SK-N-SH (cell line): ENCODE measurements at regions of chr12 and their contacts with region 1.

Region 1: DNA sequence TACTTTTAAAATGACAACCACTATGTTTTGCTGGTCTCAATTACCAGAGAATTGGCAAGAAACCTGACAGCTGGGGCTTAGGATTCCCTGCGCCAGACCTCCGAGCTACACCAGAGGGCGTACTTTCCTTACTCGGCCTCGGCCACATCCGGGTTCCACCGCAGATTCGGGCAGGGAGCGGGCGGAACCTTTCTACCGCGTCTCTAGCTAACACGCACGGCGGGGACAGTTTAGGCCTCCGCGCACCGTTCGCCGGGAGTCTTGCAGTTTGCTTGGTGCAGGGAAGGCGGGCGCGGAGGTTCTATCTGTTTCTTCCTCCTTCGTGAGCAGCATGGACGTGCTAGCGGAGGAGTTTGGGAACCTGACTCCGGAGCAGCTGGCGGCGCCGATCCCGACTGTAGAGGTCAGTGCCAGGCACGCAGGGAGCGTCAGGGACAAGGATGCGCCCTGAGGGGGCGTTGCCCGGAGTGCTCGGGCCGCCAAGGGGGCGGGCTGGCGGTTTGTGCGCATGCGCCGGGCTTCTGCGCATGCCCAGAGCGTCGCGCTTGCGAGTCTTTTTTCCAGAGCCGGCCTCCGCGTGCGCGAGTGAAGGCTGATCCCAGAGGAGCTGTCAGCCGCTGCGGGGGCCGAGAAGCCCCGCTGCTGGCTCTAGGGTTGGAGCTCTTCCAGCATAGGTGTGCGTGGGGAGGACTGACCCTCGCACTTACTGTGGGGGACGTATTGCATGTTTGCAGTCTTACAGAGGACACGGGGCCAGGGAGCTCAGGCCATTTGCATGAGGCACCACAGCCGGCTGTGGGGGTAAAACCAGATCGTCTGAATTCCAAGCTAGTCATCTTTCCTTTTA is at the start of gene POLR3B:
- DNase-seq: peak; percentile 96
- H3K4me3 ChIP-seq: peak within 1 kb of the TSS; percentile 82 to 87
- H3K27ac ChIP-seq: peak within 1 kb of the TSS; percentile 91 to 98
- H3K4me1 ChIP-seq: peaks cover 0 to 7% of the 10 kb centered on the region in 2 experiments; a peak in 2 of 4 replicates
- H3K27me3 ChIP-seq: no peaks in the 10 kb centered on the region
- CTCF ChIP-seq: peak; percentile 83
- EP300 ChIP-seq: peak in 1 of 2 experiments; percentile 39; a peak in 2 of 4 replicates
- RAD21 ChIP-seq: peak; percentile 76
- polyA plus RNA-seq, gene POLR3B: 3.3 and 3.9 TPM in 2 replicates

Region 2: DNA sequence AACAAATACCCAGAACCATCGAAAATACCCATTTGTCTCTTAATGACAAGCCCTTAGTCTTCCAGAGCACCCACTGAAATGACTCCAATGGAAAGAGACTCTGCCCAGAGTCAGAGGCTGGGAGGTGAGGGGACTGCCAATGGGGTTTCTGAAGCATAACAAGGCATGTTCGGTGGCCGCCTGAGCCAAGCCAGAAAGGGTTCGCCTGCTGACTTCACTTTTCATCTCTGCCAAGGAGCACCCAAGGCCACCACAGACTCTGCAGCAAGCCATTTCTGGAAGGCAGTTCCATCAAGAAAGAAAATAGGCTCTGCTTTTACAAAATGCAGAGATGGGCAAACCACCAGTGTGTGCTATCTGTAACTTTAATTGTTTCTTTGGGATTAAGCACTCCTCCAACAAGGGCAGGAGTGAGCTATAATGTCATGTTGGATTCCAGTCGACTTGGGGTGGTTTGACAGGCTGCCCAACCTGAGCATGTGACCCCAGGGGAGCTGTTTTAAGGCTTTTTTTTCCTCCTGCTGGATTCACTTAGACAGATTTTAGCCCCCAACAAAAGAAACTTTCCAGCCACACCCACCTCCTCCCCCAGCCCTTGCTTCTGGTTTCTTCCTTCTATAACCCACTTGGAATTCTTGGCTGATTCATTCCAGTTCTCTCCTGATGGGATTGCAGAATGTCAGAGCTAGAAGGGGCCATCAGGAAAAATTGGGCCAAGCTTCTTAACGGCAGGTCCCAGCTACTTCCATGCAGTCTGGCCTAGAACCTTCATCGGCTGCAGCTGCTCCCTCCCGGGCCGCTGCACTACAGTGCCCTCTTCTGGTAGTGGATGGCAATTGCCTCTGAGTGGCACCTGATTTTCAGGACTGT is 134.1 kb before region 1 on chr12:
- CTCF ChIA-PET with region 1: interaction called, 20 read pairs
- POLR2A ChIA-PET with region 1: interaction called, 3 read pairs
- DNase-seq: peak; percentile 81
- H3K4me3 ChIP-seq: peak overlapping the region in 1 of 2 experiments; percentile 21; a peak in 1 of 4 replicates
- H3K27ac ChIP-seq: no peak overlapping the region
- H3K4me1 ChIP-seq: no peaks in the 10 kb centered on the region
- H3K27me3 ChIP-seq: no peaks in the 10 kb centered on the region
- CTCF ChIP-seq: peak; percentile 87
- EP300 ChIP-seq: no peak
- RAD21 ChIP-seq: peak; percentile 75

Region 3: DNA sequence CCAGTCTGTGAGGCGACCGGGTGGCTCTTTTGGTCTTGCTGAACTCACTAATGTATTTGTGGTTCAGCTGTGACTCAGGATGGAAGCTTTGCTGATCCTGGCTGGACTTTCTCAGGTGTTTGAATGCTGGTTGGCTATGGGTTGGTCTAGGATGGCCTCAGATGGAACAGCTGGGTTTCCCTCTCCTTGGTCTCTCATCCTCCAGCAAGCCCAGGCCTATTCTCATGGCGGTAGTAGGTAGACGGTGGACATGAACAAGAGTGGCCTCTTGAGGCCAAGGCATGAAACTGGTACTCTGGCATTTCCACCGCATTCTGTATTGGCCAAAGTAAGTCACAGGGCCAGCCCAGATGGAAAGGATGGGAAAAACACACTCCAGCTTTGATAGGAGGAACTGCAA is 12.0 kb before region 1 on chr12:
- CTCF ChIA-PET with region 1: interaction called, 21 read pairs
- POLR2A ChIA-PET with region 1: no interaction called
- DNase-seq: peak; percentile 25
- H3K4me3 ChIP-seq: no peak overlapping the region
- H3K27ac ChIP-seq: no peak overlapping the region
- H3K4me1 ChIP-seq: peaks cover 4 to 6% of the 10 kb centered on the region in 2 experiments; a peak in 3 of 4 replicates
- H3K27me3 ChIP-seq: no peaks in the 10 kb centered on the region
- CTCF ChIP-seq: peak; percentile 42
- EP300 ChIP-seq: no peak
- RAD21 ChIP-seq: peak; percentile 61

Region 4: GRCh38 chr12:106378788-106379187 is 21.0 kb after region 1 on chr12:
- CTCF ChIA-PET with region 1: interaction called, 16 read pairs
- POLR2A ChIA-PET with region 1: no interaction called
- DNase-seq: no peak
- H3K4me3 ChIP-seq: no peak overlapping the region
- H3K27ac ChIP-seq: no peak overlapping the region
- H3K4me1 ChIP-seq: no peaks in the 10 kb centered on the region
- H3K27me3 ChIP-seq: no peaks in the 10 kb centered on the region
- CTCF ChIP-seq: no peak
- EP300 ChIP-seq: no peak
- RAD21 ChIP-seq: no peak

Region 5: DNA sequence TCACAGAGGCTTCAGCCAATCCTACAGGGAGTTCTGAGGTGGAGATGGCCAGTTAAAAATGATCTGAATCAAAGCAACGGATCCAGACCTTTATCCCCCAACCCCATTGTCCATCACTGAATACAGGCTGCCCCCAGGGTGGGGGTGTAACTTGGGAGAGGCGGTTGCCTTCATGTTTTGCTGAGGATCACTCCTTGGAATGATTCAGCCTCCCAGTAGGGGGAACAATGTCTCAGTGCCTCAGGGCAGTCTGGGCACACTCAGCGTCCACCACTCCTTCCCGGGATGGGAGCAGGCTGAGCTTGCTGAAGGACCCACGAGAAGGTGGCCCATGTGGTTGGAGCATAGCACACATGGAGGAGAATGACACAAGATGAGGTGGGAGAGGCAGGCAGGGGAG is 285.2 kb after region 1 on chr12:
- CTCF ChIA-PET with region 1: no interaction called
- POLR2A ChIA-PET with region 1: no interaction called
- DNase-seq: no peak
- H3K4me3 ChIP-seq: no peak overlapping the region
- H3K27ac ChIP-seq: no peak overlapping the region
- H3K4me1 ChIP-seq: no peaks in the 10 kb centered on the region
- H3K27me3 ChIP-seq: no peaks in the 10 kb centered on the region
- CTCF ChIP-seq: no peak
- EP300 ChIP-seq: no peak
- RAD21 ChIP-seq: no peak

Region 6: DNA sequence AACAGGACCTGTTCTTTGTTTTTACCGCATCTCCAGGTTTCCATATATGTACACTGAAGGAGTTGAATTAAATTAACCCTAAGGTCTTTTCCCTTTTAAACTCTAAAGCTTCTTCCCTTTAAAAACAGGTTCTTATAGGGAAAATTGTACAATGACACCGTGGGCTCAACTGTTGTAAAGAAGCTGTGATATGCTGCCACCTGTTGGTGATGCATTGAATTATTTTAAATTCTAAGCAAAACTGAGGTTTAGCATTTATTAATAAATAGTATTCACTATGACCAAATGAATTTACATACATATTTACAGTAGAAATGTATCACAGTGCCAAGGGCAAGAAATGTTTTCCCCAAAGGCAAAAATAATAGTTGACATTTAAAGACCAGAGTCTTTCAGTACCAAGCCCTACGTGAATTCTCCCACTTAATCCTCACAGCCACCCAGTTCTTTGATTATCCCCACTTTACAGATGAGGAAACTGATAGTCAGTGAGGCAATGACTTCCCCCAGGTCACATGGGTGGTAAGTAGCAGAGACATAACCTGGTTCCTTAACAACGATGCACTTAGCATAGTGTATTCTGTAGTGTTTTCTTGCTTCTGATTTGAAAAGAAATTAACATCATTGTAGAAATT is 562.3 kb after region 1 on chr12:
- CTCF ChIA-PET with region 1: interaction called, 49 read pairs
- POLR2A ChIA-PET with region 1: interaction called, 6 read pairs
- DNase-seq: peak; percentile 54
- H3K4me3 ChIP-seq: no peak overlapping the region
- H3K27ac ChIP-seq: no peak overlapping the region
- H3K4me1 ChIP-seq: no peaks in the 10 kb centered on the region
- H3K27me3 ChIP-seq: no peaks in the 10 kb centered on the region
- CTCF ChIP-seq: peak; percentile 86
- EP300 ChIP-seq: no peak
- RAD21 ChIP-seq: peak; percentile 88